ENCODE measurements at regions of chr2 and their contacts with region 1.

Region 1: DNA sequence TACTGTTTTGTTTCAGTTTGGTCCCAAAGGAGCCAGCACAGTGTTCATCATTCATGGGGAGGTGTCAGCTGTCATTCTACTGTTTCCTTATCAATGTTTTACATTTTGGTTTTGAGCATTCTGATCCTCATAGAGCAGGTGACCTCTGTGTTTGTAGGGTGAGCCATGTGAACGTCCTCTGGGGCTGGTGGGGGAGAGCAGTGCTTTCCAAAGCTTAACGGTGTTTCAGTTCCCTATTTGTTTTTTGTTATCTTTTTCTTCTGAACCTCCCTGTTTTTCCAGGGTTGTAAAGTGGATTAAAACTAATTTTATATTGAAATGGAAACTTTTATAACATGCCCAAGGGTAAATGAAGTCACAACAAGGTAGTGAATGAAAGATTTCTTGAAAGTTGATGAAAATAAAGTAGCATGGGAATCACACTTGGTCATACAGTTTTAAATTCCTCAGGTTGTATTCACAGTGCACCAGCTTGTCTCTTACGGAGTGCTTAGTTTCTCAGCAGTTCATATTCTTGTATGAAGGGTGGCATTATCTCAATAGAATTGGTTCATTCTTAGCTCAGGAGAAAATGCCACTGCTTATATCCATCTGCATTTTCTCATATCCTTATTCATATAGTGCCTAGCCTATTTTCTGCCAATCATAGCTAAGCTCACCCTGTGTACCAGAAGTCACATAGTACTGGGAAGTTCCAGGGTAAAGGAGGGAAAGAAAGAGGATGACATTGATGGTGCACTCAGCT is 54.5 kb downstream of the MAP4K4 start:
- DNase-seq: peak; percentile 66
- ATAC-seq: peak; percentile 80
- H3K4me3 ChIP-seq: no peak overlapping the region
- H3K27ac ChIP-seq: no peak overlapping the region
- H3K4me1 ChIP-seq: peaks cover 49% of the 10 kb centered on the region
- H3K27me3 ChIP-seq: no peaks in the 10 kb centered on the region
- CTCF ChIP-seq: no peak
- EP300 ChIP-seq: peak; percentile 92 to 95; a peak in 3 of 4 replicates
- POLR2A ChIP-seq: no peak
- RAD21 ChIP-seq: no peak

Region 2: GRCh38 chr2:101047075-101047766 is 704.8 kb before region 1 on chr2:
- CTCF ChIA-PET with region 1: no interaction called
- POLR2A ChIA-PET with region 1: no interaction called
- RAD21 ChIA-PET with region 1: no interaction called
- SMC1A ChIA-PET with region 1: no interaction called
- in situ Hi-C with region 1: no loop called
- intact Hi-C with region 1: no loop called
- DNase-seq: no peak
- ATAC-seq: no peak; the same call in 2 of the 3 replicates
- H3K4me3 ChIP-seq: no peak overlapping the region
- H3K27ac ChIP-seq: no peak overlapping the region
- H3K4me1 ChIP-seq: peaks cover 30% of the 10 kb centered on the region
- H3K27me3 ChIP-seq: no peaks in the 10 kb centered on the region
- CTCF ChIP-seq: no peak
- EP300 ChIP-seq: no peak
- POLR2A ChIP-seq: no peak
- RAD21 ChIP-seq: no peak

Region 3: GRCh38 chr2:101577173-101577572 is 174.9 kb before region 1 on chr2:
- CTCF ChIA-PET with region 1: no interaction called
- POLR2A ChIA-PET with region 1: no interaction called
- RAD21 ChIA-PET with region 1: no interaction called
- SMC1A ChIA-PET with region 1: no interaction called
- in situ Hi-C with region 1: no loop called
- intact Hi-C with region 1: no loop called
- DNase-seq: no peak
- ATAC-seq: no peak
- H3K4me3 ChIP-seq: no peak overlapping the region
- H3K27ac ChIP-seq: no peak overlapping the region
- H3K4me1 ChIP-seq: no peaks in the 10 kb centered on the region
- H3K27me3 ChIP-seq: no peaks in the 10 kb centered on the region; a peak in 1 of 4 replicates
- CTCF ChIP-seq: no peak
- EP300 ChIP-seq: no peak
- POLR2A ChIP-seq: no peak
- RAD21 ChIP-seq: no peak

Region 4: GRCh38 chr2:101623031-101623521 is 129.0 kb before region 1 on chr2:
- CTCF ChIA-PET with region 1: no interaction called
- POLR2A ChIA-PET with region 1: interaction called, 3 read pairs
- RAD21 ChIA-PET with region 1: interaction called, 13 read pairs
- SMC1A ChIA-PET with region 1: interaction called, 6 read pairs
- in situ Hi-C with region 1: no loop called
- intact Hi-C with region 1: loop called (anchors 2 kb)
- DNase-seq: peak; percentile 50
- ATAC-seq: peak; percentile 86
- H3K4me3 ChIP-seq: no peak overlapping the region; the same call in 1 of the 2 replicates
- H3K27ac ChIP-seq: peak overlapping the region; percentile 41; the same call in 1 of the 2 replicates
- H3K4me1 ChIP-seq: peaks cover 22% of the 10 kb centered on the region
- H3K27me3 ChIP-seq: no peaks in the 10 kb centered on the region
- CTCF ChIP-seq: no peak
- EP300 ChIP-seq: peak; percentile 74 to 84; a peak in 3 of 4 replicates
- POLR2A ChIP-seq: no peak
- RAD21 ChIP-seq: no peak

Region 5: DNA sequence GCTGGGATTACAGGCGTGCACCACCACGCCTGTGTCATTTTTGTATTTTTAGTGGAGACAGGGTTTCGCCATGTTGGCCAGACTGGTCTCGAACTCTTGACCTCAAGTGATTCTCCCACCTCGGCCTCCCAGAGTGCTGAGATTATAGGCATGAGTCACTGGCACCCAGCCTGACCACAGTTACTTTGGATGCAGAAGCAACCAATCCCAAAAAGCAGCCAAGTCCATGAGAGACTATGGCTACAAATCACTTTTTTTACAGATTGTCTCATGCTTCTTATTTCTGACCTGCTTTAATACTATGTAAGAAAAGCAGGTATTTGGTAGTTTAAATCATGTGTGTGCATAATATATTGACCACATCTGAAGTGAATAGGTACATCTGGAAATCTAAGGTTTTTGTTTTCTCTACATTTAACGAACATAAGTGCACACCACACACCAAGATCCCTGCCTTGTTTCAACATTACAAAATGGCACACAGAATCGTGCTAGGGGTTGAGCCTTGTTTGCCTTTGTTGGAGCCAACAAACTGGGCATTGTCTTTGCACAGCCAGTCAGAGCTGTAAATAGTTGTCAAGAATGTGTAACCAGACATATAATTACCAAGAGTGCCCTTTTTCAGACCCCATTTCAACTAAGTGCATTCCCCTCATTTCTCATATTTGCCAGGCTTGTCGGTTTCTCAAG is 72.9 kb before region 1 on chr2:
- CTCF ChIA-PET with region 1: no interaction called
- POLR2A ChIA-PET with region 1: no interaction called
- RAD21 ChIA-PET with region 1: interaction called, 8 read pairs
- SMC1A ChIA-PET with region 1: interaction called, 9 read pairs
- in situ Hi-C with region 1: no loop called
- intact Hi-C with region 1: loop called (anchors 5 kb)
- DNase-seq: no peak
- ATAC-seq: no peak
- H3K4me3 ChIP-seq: no peak overlapping the region
- H3K27ac ChIP-seq: no peak overlapping the region
- H3K4me1 ChIP-seq: no peaks in the 10 kb centered on the region
- H3K27me3 ChIP-seq: no peaks in the 10 kb centered on the region; a peak in 1 of 4 replicates
- CTCF ChIP-seq: no peak
- EP300 ChIP-seq: no peak
- POLR2A ChIP-seq: no peak
- RAD21 ChIP-seq: no peak

Region 6: DNA sequence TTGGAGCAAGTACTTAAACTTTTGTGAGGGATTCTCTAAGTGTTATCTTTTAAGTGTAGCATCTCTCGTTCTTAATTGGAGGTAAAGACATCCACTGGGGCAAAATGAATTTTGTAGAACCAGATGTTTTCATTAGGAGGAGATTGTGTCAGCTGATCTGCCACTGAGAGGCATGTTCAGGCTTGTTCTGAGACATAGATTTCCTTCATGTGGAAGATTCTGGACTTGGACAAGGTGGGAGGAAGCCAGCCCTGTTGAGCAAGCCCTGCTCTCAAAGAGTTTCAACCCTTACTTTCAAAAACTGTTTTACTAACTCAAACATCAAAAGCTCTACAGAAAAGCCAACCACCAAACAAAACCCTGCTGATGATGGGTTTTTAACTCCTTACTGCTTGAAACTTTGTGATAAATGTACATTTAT is 48.0 kb before region 1 on chr2:
- CTCF ChIA-PET with region 1: interaction called, 3 read pairs
- POLR2A ChIA-PET with region 1: no interaction called
- RAD21 ChIA-PET with region 1: interaction called, 6 read pairs
- SMC1A ChIA-PET with region 1: interaction called, 7 read pairs
- in situ Hi-C with region 1: no loop called
- intact Hi-C with region 1: loop called (anchors 5 kb)
- DNase-seq: no peak
- ATAC-seq: peak; percentile 14
- H3K4me3 ChIP-seq: no peak overlapping the region
- H3K27ac ChIP-seq: no peak overlapping the region
- H3K4me1 ChIP-seq: peaks cover 15% of the 10 kb centered on the region
- H3K27me3 ChIP-seq: peaks cover 0 to 6% of the 10 kb centered on the region in 2 experiments; a peak in 1 of 4 replicates
- CTCF ChIP-seq: no peak
- EP300 ChIP-seq: no peak
- POLR2A ChIP-seq: no peak
- RAD21 ChIP-seq: no peak

Region 7: DNA sequence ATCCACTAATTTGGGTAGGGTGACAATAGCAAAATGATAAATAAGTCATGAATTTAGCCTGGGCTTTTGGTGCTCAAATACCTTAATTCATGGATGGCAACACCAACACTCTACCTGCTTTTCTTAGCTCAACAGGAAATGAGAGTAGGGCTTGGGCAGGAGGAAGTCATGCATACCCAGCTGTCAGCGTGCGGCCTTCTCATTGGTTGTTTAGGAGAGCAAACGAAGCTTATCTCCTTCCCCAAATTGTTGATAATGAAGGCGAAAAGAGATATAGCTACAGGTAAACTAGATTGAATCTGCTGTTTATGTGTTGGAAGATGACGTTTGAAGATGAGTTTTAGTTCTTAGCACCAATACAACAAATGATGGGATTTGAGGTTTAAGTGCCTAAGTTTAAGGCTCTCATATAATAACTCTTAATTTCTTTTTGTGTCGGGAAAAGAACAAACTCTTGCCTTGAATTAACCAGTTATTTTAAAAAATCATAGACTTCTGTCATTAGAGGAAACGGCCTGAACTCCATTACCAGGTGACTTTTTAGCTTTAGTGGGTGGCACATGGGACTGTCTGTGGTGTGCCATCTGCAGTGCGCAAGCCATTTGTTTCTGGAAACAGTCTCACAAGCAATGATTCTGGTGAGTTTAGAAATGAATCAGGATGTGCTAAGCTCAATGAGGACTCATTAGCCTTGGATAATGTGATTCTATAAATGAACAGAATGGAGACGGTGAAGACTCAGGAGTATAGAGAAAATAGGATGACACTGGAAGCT is 34.8 kb before region 1 on chr2:
- CTCF ChIA-PET with region 1: interaction called, 4 read pairs
- POLR2A ChIA-PET with region 1: interaction called, 6 read pairs
- RAD21 ChIA-PET with region 1: interaction called, 10 read pairs
- SMC1A ChIA-PET with region 1: interaction called, 26 read pairs
- in situ Hi-C with region 1: no loop called
- intact Hi-C with region 1: no loop called
- DNase-seq: peak; percentile 44
- ATAC-seq: peak; percentile 84
- H3K4me3 ChIP-seq: 0 out of 2 replicates have a peak overlapping the region, but pooled peaks have one; percentile 10
- H3K27ac ChIP-seq: no peak overlapping the region; the same call in 1 of the 2 replicates
- H3K4me1 ChIP-seq: peaks cover 21% of the 10 kb centered on the region
- H3K27me3 ChIP-seq: no peaks in the 10 kb centered on the region; a peak in 1 of 4 replicates
- CTCF ChIP-seq: no peak
- EP300 ChIP-seq: no peak
- POLR2A ChIP-seq: no peak
- RAD21 ChIP-seq: no peak

Region 8: GRCh38 chr2:101725515-101726192 is 26.4 kb before region 1 on chr2:
- CTCF ChIA-PET with region 1: interaction called, 5 read pairs
- POLR2A ChIA-PET with region 1: interaction called, 6 read pairs
- RAD21 ChIA-PET with region 1: interaction called, 6 read pairs
- SMC1A ChIA-PET with region 1: interaction called, 22 read pairs
- in situ Hi-C with region 1: no loop called
- intact Hi-C with region 1: no loop called
- DNase-seq: no peak
- ATAC-seq: 0 out of 3 replicates have a peak, but pooled peaks have one; percentile 15
- H3K4me3 ChIP-seq: no peak overlapping the region
- H3K27ac ChIP-seq: no peak overlapping the region
- H3K4me1 ChIP-seq: no peaks in the 10 kb centered on the region
- H3K27me3 ChIP-seq: no peaks in the 10 kb centered on the region; a peak in 1 of 4 replicates
- CTCF ChIP-seq: peak; percentile 21 to 46 (median 28); a peak in 5 of 6 replicates
- EP300 ChIP-seq: no peak
- POLR2A ChIP-seq: no peak
- RAD21 ChIP-seq: peak; percentile 58

Region 9: DNA sequence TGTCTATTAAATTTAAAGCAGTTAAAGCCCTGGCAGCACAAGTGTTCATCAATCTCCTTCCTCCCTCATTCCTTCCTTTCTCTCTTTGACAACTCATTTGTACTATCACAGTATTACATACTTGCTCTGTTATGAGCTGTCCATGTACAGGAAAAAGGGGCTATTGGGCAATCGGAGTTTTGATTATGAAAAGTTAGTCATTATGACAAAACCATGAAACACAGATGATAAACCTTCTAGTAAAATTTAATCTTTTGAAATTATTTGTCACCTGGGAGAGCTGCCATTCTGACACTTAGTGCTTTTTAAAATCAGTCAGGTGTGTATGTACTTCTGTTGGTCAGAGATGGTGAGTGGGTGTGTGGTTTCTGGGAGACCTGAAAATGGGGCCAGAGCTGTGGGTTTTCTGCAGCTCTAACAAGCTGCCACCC is 15.2 kb before region 1 on chr2:
- CTCF ChIA-PET with region 1: interaction called, 6 read pairs
- POLR2A ChIA-PET with region 1: interaction called, 6 read pairs
- RAD21 ChIA-PET with region 1: interaction called, 5 read pairs
- SMC1A ChIA-PET with region 1: interaction called, 10 read pairs
- in situ Hi-C with region 1: no loop called
- intact Hi-C with region 1: no loop called
- DNase-seq: no peak
- ATAC-seq: peak; percentile 58
- H3K4me3 ChIP-seq: no peak overlapping the region
- H3K27ac ChIP-seq: no peak overlapping the region
- H3K4me1 ChIP-seq: no peaks in the 10 kb centered on the region
- H3K27me3 ChIP-seq: no peaks in the 10 kb centered on the region
- CTCF ChIP-seq: no peak
- EP300 ChIP-seq: no peak
- POLR2A ChIP-seq: no peak
- RAD21 ChIP-seq: no peak

Region 10: GRCh38 chr2:101852824-101853223 is 100.8 kb after region 1 on chr2:
- CTCF ChIA-PET with region 1: no interaction called
- POLR2A ChIA-PET with region 1: no interaction called
- RAD21 ChIA-PET with region 1: no interaction called
- SMC1A ChIA-PET with region 1: no interaction called
- in situ Hi-C with region 1: no loop called
- intact Hi-C with region 1: no loop called
- DNase-seq: no peak
- ATAC-seq: no peak
- H3K4me3 ChIP-seq: no peak overlapping the region
- H3K27ac ChIP-seq: no peak overlapping the region
- H3K4me1 ChIP-seq: no peaks in the 10 kb centered on the region
- H3K27me3 ChIP-seq: no peaks in the 10 kb centered on the region
- CTCF ChIP-seq: no peak
- EP300 ChIP-seq: no peak
- POLR2A ChIP-seq: no peak
- RAD21 ChIP-seq: no peak

Measured in GM12878 (cell line).